Right lobe of liver (tissue), 6 donors: ENCODE measurements at regions of chr20 and their contacts with region 1.

Region 1: GRCh38 chr20:41854765-41855164 is 236.6 kb upstream of the CHD6 start:
- DNase-seq: no peak
- ATAC-seq: no peak
- H3K4me3 ChIP-seq: no peak overlapping the region
- H3K27ac ChIP-seq: no peak overlapping the region
- H3K4me1 ChIP-seq: no peaks in the 10 kb centered on the region
- H3K27me3 ChIP-seq: peaks cover 0 to 7% of the 10 kb centered on the region in 2 donors
- CTCF ChIP-seq: no peak
- POLR2A ChIP-seq: no peak

Region 2: GRCh38 chr20:41738604-41739206 is 116.1 kb before region 1 on chr20:
- intact Hi-C with region 1: loop called in 1 of 2 experiments (anchors 5 kb)
- DNase-seq: peak; percentile 47 to 62 (median 52)
- ATAC-seq: peak; percentile 82 to 90 (median 88)
- H3K4me3 ChIP-seq: no peak overlapping the region
- H3K27ac ChIP-seq: no peak overlapping the region
- H3K4me1 ChIP-seq: no peaks in the 10 kb centered on the region
- H3K27me3 ChIP-seq: no peaks in the 10 kb centered on the region
- CTCF ChIP-seq: peak; percentile 63 to 91 (median 88)
- POLR2A ChIP-seq: no peak

Region 3: GRCh38 chr20:42110301-42110700 is 255.5 kb after region 1 on chr20:
- intact Hi-C with region 1: no loop called
- DNase-seq: no peak
- ATAC-seq: no peak
- H3K4me3 ChIP-seq: no peak overlapping the region
- H3K27ac ChIP-seq: no peak overlapping the region
- H3K4me1 ChIP-seq: no peaks in the 10 kb centered on the region
- H3K27me3 ChIP-seq: no peaks in the 10 kb centered on the region
- CTCF ChIP-seq: no peak
- POLR2A ChIP-seq: no peak